ENCODE measurements at regions of chr3 and their contacts with region 1.

Region 1: GRCh38 chr3:24220859-24221657 is 273.6 kb downstream of the THRB start:
- DNase-seq: peak; percentile 79
- ATAC-seq: peak; percentile 49
- H3K4me3 ChIP-seq: no peak overlapping the region
- H3K27ac ChIP-seq: no peak overlapping the region
- H3K4me1 ChIP-seq: peaks cover 7% of the 10 kb centered on the region; the same call in 1 of the 2 replicates
- H3K27me3 ChIP-seq: no peaks in the 10 kb centered on the region
- CTCF ChIP-seq: no peak

Region 2: DNA sequence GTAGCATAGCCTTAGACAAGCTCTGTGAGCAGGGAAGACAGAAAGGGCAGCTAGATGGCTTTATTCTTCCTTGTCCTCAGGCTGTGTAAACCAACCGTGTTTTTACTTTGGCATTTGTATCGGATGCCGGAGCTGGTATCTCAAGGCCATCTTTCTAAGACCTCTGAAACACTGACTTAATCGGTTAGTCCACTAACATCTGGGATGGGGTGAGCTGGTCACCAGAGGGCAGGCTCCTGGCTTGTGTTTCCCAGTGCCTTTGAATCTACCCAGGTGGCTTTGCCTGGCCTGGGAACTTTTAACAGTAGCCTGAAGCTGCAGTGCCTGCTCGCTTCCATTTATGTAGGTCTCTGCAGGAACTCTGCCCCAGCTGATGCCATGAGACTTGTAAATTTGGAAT is 23.2 kb before region 1 on chr3:
- CTCF ChIA-PET with region 1: interaction called, 12 read pairs
- POLR2A ChIA-PET with region 1: no interaction called
- intact Hi-C with region 1: no loop called
- DNase-seq: peak; percentile 11
- ATAC-seq: no peak; the same call in 1 of the 2 replicates
- H3K4me3 ChIP-seq: no peak overlapping the region
- H3K27ac ChIP-seq: no peak overlapping the region
- H3K4me1 ChIP-seq: no peaks in the 10 kb centered on the region
- H3K27me3 ChIP-seq: no peaks in the 10 kb centered on the region
- CTCF ChIP-seq: peak; percentile 22; the same call in 1 of the 2 replicates